Transverse colon (tissue), 4 donors: ENCODE measurements at regions of chr1 and their contacts with region 1.

Region 1: DNA sequence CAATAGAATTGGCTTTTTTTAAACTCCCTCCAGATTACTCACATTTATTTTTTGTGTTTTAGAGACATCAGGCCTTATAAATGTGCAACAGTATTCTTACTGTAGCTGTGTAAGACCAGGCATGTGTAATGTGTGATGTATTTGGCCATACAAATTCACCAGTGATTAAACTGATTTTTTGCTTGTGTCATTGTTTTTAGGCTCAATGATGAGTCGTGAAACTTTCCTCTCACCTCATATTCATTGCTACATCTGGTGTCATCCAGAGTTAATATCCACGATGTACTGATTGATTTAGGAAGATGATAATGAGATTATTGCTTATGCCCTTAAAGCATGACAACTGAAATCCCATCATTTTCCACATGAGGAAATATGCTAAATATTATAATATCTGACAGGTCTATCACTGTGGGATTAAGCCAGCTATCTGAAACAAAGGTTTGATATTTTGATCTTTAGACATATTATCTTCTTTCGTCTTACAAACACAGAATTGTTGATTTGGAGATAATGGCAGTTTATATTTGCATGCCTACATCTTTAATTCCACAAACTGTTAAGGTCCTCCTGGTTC is 487.9 kb downstream of the PTBP2 start:
- DNase-seq: no peak
- H3K4me3 ChIP-seq: no peak overlapping the region
- H3K27ac ChIP-seq: no peak overlapping the region
- H3K4me1 ChIP-seq: no peaks in the 10 kb centered on the region
- H3K27me3 ChIP-seq: no peaks in the 10 kb centered on the region
- CTCF ChIP-seq: no peak
- EP300 ChIP-seq: no peak
- POLR2A ChIP-seq: no peak

Region 2: DNA sequence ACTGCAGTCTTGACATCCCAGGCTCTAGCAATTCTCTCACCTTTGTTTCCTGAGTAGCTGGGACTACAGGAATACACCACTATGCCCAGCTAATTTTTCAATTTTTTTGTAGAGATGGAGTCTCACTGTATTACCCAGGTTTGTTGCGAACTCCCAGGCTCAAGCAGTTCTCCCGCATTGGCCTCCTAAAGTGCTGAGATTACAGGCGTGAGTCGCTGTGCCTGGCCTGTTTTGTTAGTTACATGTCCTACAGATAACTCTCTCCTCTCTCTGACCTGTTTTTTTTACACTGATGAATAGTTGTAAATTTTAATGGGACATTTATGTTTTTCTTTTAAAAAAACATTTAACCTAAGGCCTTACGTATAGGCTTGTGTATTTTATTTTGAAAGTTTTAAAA is 468.1 kb before region 1 on chr1:
- in situ Hi-C with region 1: no loop called
- intact Hi-C with region 1: no loop called
- DNase-seq: no peak
- H3K4me3 ChIP-seq: no peak overlapping the region
- H3K27ac ChIP-seq: no peak overlapping the region
- H3K4me1 ChIP-seq: peaks cover 0 to 30% (median 3%) of the 10 kb centered on the region in 4 donors
- H3K27me3 ChIP-seq: no peaks in the 10 kb centered on the region
- CTCF ChIP-seq: no peak
- EP300 ChIP-seq: no peak
- POLR2A ChIP-seq: no peak

Region 3: GRCh38 chr1:97042551-97042950 is 166.9 kb before region 1 on chr1:
- in situ Hi-C with region 1: no loop called
- intact Hi-C with region 1: no loop called
- DNase-seq: no peak
- H3K4me3 ChIP-seq: no peak overlapping the region
- H3K27ac ChIP-seq: no peak overlapping the region
- H3K4me1 ChIP-seq: no peaks in the 10 kb centered on the region
- H3K27me3 ChIP-seq: no peaks in the 10 kb centered on the region
- CTCF ChIP-seq: no peak
- EP300 ChIP-seq: no peak
- POLR2A ChIP-seq: no peak

Region 4: DNA sequence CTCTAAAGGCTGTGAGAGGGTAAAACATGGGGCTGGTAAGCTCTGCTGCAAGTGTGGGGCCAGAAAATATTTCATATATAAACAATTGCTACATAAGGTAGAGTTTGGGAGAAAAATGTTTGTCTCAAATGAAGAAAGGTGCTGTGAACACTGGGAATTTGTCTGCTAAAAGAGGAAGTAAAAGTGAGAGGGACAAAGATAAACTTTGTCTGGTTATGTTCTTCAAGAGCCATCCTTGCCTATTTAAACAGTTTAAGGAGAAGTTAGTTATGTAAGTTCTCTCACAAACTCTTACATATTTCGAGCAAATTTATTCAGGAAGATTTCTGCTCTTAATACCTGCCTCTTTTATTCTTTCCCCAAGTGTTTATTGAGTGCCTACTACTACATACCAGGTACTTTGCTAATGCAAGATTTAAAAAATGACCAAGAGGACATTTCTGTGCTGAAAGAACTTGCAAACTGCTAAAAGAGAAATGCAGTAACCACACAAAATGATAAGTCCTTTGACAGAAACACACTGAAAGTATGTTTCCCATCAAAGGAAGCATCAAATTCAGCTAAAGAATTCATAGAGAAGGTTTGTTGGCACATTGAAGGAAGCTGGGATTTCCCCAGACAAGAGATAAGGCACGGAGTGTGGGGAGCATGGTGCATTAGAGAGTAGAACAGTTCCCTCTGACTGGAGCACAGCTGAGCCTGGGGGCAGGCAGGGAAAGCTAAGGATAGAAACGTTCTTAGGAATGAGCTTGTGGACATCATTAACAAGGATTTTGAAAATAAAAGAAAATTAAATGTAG is 61.2 kb after region 1 on chr1:
- in situ Hi-C with region 1: no loop called
- intact Hi-C with region 1: no loop called
- DNase-seq: no peak
- H3K4me3 ChIP-seq: no peak overlapping the region
- H3K27ac ChIP-seq: no peak overlapping the region
- H3K4me1 ChIP-seq: peaks cover 0 to 21% (median 5%) of the 10 kb centered on the region in 4 donors
- H3K27me3 ChIP-seq: no peaks in the 10 kb centered on the region
- CTCF ChIP-seq: no peak
- EP300 ChIP-seq: no peak
- POLR2A ChIP-seq: no peak

Region 5: DNA sequence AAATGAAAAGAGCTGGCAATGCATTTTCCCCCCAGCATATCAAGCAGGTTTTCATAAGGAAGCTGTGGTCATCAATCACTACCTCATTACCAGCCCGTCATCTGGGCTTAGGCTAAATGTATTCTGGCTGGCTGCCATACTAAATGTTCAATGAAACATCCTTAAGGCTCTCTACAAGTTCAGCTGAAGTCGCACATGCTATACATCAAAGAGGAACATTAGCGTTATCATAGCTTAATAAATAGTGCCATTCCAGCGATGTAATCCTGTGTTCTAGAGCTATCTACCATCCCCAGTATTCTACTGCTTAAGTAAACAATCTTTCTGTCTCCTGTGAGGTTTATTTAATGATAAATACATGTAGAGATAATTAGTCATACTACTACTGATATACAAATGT is 422.6 kb after region 1 on chr1:
- in situ Hi-C with region 1: no loop called
- intact Hi-C with region 1: loop called (anchors 5 kb)
- DNase-seq: no peak
- H3K4me3 ChIP-seq: no peak overlapping the region
- H3K27ac ChIP-seq: no peak overlapping the region
- H3K4me1 ChIP-seq: no peaks in the 10 kb centered on the region
- H3K27me3 ChIP-seq: no peaks in the 10 kb centered on the region
- CTCF ChIP-seq: no peak
- EP300 ChIP-seq: no peak
- POLR2A ChIP-seq: no peak